Body of pancreas (tissue), 4 donors: ENCODE measurements at regions of chr1 and their contacts with region 1.

Region 1: GRCh38 chr1:27203946-27204345 is 30.5 kb upstream of the WDTC1 start:
- DNase-seq: no peak
- ATAC-seq: no peak
- H3K4me3 ChIP-seq: no peak overlapping the region
- H3K27ac ChIP-seq: no peak overlapping the region
- H3K4me1 ChIP-seq: no peaks in the 10 kb centered on the region
- H3K27me3 ChIP-seq: no peaks in the 10 kb centered on the region
- CTCF ChIP-seq: no peak
- POLR2A ChIP-seq: no peak

Region 2: GRCh38 chr1:27284425-27285273 is 80.7 kb after region 1 on chr1:
- intact Hi-C with region 1: loop called (anchors 10 kb)
- DNase-seq: peak; percentile 85 to 93 (median 87)
- ATAC-seq: peak; percentile 85
- H3K4me3 ChIP-seq: no peak overlapping the region
- H3K27ac ChIP-seq: no peak overlapping the region
- H3K4me1 ChIP-seq: no peaks in the 10 kb centered on the region
- H3K27me3 ChIP-seq: no peaks in the 10 kb centered on the region
- CTCF ChIP-seq: peak; percentile 67 to 91 (median 76)
- POLR2A ChIP-seq: no peak